MCF 10A (cell line): ENCODE measurements at regions of chr1 and their contacts with region 1.

Region 1: DNA sequence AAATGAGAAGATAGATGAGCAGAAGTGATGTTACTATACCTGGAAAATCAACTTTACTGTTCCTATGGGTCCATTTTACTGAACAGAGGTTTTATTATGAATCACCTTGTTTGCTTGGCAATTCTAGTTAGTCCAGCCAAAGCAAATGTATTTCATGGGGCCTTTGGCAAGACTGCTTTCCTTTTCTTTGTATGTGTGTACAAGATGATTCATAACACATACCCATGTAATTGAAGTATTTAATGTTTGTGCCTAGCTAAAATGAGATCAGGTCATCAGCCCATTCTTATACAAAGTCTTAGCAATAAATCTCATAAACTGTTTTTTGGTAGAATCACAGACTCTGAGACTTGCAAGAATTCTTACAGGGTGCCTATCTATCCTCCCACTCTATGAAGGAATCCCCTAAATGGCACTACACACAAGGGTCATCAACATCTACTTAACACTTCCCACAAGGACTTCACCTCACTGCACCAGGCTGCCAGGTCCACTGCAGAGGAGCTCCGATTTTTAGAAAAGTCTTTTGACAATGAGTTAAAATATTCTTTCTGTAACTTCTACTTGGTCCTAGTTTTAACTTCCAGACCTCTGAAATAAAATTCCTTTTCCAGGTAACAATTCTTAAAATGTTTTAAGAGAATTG is 58.5 kb downstream of the LPAR3 start:
- DNase-seq: peak; percentile 87
- H3K4me3 Mint-ChIP-seq: peak overlapping the region; percentile 2
- H3K27ac Mint-ChIP-seq: peak overlapping the region; percentile 57
- H3K4me1 Mint-ChIP-seq: peaks cover 20% of the 10 kb centered on the region
- H3K27me3 Mint-ChIP-seq: no peaks in the 10 kb centered on the region
- CTCF ChIP-seq: no peak

Region 2: DNA sequence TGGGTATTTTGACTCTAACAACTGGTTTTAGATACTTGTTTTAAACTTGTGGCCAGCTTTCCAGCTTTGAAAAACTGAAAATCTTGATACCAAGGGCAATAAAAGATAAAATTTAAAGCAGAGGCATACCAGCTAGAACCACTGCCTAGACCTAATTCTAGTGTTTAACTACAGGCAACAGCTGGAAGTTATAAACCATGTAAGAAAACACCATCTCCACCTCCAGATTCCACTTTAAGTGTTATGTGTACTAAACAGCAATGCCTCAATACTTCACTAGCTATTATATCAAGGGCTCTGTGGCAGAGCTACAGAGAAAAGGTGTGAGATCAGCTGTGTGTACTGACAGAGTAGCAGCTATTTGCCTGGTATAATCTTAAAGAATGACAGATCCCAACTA is 11.0 kb before region 1 on chr1:
- CTCF ChIA-PET with region 1: interaction called, 3 read pairs
- POLR2A ChIA-PET with region 1: interaction called, 17 read pairs
- intact Hi-C with region 1: no loop called
- DNase-seq: no peak
- H3K4me3 Mint-ChIP-seq: no peak overlapping the region
- H3K27ac Mint-ChIP-seq: no peak overlapping the region
- H3K4me1 Mint-ChIP-seq: peaks cover 8% of the 10 kb centered on the region
- H3K27me3 Mint-ChIP-seq: no peaks in the 10 kb centered on the region
- CTCF ChIP-seq: no peak

Region 3: GRCh38 chr1:84847253-84848250 is 13.0 kb after region 1 on chr1:
- CTCF ChIA-PET with region 1: interaction called, 7 read pairs
- POLR2A ChIA-PET with region 1: interaction called, 18 read pairs
- intact Hi-C with region 1: no loop called
- DNase-seq: peak; percentile 99
- H3K4me3 Mint-ChIP-seq: peak overlapping the region; percentile 29
- H3K27ac Mint-ChIP-seq: peak overlapping the region; percentile 84
- H3K4me1 Mint-ChIP-seq: peaks cover 44% of the 10 kb centered on the region
- H3K27me3 Mint-ChIP-seq: no peaks in the 10 kb centered on the region
- CTCF ChIP-seq: no peak